ENCODE measurements at regions of chrX and their contacts with region 1.

Region 1: DNA sequence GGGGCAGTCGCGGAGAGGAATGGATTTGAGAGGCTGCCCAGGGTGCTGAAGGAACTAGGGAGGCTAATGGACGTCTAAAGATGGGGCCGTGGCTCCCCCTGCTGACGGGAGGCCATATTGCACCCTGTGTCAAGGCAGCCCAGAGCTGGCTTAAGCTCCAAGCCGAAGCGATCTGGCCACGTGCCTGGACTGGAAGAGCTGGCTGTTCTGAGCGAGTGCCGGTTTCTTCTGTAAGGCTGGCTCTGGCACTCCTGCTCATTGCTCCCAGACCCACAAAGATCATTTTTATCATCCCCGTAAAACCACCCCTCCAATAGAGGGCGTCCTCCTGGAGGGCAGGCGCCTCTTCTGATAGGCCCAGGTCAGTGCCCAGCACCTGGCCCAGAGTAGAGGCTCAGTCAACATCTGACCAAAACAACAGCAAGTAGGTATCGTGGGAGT is 5.6 kb downstream of the PNCK start:
- DNase-seq: peak; percentile 88
- ATAC-seq: peak; percentile 92
- H3K4me3 Mint-ChIP-seq: peak overlapping the region; percentile 70
- H3K27ac Mint-ChIP-seq: no peak overlapping the region
- H3K4me1 Mint-ChIP-seq: peaks cover 7% of the 10 kb centered on the region
- H3K27me3 Mint-ChIP-seq: peaks cover 7% of the 10 kb centered on the region

Region 2: GRCh38 chrX:152958524-152959465 is 709.2 kb before region 1 on chrX:
- CTCF ChIA-PET with region 1: interaction called, 3 read pairs
- POLR2A ChIA-PET with region 1: no interaction called
- intact Hi-C with region 1: loop called (anchors 5 kb)
- DNase-seq: peak; percentile 91
- ATAC-seq: peak; percentile 98
- H3K4me3 Mint-ChIP-seq: peak overlapping the region; percentile 52
- H3K27ac Mint-ChIP-seq: peak overlapping the region; percentile 91
- H3K4me1 Mint-ChIP-seq: peaks cover 6% of the 10 kb centered on the region
- H3K27me3 Mint-ChIP-seq: no peaks in the 10 kb centered on the region

Region 3: DNA sequence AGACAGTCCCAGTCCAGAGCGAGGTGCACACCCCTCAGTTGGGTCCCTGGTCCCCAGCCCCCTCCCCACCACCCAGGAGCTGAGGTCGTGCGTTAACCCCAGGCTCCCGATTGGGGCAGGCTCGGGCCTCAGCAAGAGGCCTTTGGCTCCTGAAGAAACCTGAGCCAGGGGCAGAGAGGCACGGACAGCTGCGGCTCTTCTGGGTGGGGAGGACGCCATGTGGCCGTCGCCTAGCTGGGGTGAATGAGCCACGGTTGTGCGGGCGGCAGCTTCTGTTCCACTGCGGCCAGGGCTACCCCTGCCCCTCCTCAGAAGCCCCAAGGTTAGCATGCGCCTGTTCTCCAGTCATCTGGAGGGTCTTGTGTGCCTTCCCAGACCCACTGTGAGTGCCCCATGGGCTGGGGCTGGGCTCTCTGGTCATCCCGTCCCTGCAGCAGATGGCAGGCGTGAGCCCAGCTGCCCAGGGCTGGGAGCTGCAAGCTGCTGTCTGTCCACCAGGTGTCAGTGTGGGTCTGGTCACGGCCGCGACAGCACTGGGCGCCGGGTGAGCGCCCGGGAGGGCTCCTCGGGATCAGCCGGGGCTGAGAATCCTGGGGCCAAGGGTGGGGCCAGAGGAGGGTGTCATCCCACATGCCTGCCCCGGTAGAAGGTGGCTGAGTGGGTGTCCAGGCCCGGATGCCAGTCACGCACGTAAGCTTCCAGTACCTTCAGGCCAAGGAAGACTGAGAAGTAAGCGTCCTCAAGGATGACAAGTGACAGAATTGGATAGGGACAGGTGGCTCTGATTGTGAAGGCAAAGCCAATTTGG is 128.6 kb before region 1 on chrX:
- CTCF ChIA-PET with region 1: interaction called, 33 read pairs
- POLR2A ChIA-PET with region 1: no interaction called
- intact Hi-C with region 1: loop called (anchors 1 to 5 kb)
- DNase-seq: peak; percentile 73
- ATAC-seq: peak; percentile 93
- H3K4me3 Mint-ChIP-seq: no peak overlapping the region
- H3K27ac Mint-ChIP-seq: no peak overlapping the region
- H3K4me1 Mint-ChIP-seq: no peaks in the 10 kb centered on the region
- H3K27me3 Mint-ChIP-seq: peaks cover 2% of the 10 kb centered on the region

Region 4: DNA sequence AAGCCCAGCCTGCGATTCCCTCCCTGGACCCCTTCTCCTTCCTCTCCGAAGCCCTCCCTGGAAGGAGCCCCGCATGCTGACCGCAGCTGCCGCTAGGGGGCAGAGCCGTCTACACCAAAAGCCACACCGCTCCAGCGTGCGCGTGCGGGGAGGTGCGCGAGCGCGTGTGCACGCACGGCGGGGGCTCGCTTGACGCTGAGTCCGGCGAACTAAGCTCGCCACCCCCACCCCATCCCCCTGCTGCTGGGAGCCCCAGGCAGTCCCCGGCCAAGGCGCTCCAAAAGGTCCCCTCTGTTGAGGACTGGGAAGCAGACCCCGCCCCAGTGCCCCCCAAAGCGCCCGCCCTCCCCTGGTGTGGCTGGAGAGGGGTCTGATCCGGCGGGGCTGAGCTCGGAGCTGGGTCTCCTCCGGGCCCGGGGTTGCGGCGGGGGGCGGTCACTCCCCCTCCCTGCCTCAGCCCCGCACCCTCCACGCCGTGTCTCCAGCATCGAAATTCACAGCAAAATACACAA is 58.0 kb before region 1 on chrX:
- CTCF ChIA-PET with region 1: interaction called, 19 read pairs
- POLR2A ChIA-PET with region 1: no interaction called
- intact Hi-C with region 1: loop called (anchors 1 to 5 kb)
- DNase-seq: peak; percentile 85
- ATAC-seq: peak; percentile 91
- H3K4me3 Mint-ChIP-seq: peak overlapping the region; percentile 62
- H3K27ac Mint-ChIP-seq: peak overlapping the region; percentile 73
- H3K4me1 Mint-ChIP-seq: peaks cover 13% of the 10 kb centered on the region
- H3K27me3 Mint-ChIP-seq: no peaks in the 10 kb centered on the region

Region 5: DNA sequence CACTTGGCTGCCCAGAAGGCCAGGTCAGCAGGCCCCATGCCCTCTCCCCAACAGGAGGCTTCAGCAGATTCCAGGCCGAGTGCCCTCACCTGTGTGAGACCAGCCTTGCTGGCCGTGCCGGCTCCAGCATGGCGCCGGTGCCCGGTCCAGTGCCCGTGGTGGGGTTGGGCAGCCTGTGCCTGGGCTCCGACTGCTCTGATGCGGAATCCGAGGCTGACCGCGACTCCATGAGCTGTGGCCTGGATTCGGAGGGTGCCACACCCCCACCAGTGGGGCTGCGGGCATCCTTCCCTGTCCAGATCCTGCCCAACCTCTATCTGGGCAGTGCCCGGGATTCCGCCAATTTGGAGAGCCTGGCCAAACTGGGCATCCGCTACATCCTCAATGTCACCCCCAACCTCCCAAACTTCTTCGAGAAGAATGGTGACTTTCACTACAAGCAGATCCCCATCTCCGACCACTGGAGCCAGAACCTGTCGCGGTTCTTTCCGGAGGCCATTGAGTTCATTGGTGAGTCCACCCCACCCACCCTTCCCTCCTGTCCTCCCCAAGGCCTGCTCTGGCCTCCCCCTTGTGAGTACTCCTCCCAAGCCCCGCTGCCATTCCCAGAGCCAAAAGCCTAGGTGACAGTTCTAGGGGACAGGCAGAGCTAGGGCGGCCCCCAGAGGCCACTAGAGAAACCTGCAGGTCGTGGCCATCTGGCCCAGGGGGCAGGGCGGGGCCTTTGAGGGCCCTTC is 18.6 kb before region 1 on chrX:
- CTCF ChIA-PET with region 1: interaction called, 12 read pairs
- POLR2A ChIA-PET with region 1: no interaction called
- intact Hi-C with region 1: no loop called
- DNase-seq: peak; percentile 64
- ATAC-seq: peak; percentile 84
- H3K4me3 Mint-ChIP-seq: no peak overlapping the region
- H3K27ac Mint-ChIP-seq: no peak overlapping the region
- H3K4me1 Mint-ChIP-seq: no peaks in the 10 kb centered on the region
- H3K27me3 Mint-ChIP-seq: peaks cover 17% of the 10 kb centered on the region

Region 6: GRCh38 chrX:153684467-153685155 is 16.6 kb after region 1 on chrX:
- CTCF ChIA-PET with region 1: interaction called, 12 read pairs
- POLR2A ChIA-PET with region 1: no interaction called
- intact Hi-C with region 1: no loop called
- DNase-seq: no peak
- ATAC-seq: no peak
- H3K4me3 Mint-ChIP-seq: no peak overlapping the region
- H3K27ac Mint-ChIP-seq: no peak overlapping the region
- H3K4me1 Mint-ChIP-seq: no peaks in the 10 kb centered on the region
- H3K27me3 Mint-ChIP-seq: peaks cover 8% of the 10 kb centered on the region

Region 7: DNA sequence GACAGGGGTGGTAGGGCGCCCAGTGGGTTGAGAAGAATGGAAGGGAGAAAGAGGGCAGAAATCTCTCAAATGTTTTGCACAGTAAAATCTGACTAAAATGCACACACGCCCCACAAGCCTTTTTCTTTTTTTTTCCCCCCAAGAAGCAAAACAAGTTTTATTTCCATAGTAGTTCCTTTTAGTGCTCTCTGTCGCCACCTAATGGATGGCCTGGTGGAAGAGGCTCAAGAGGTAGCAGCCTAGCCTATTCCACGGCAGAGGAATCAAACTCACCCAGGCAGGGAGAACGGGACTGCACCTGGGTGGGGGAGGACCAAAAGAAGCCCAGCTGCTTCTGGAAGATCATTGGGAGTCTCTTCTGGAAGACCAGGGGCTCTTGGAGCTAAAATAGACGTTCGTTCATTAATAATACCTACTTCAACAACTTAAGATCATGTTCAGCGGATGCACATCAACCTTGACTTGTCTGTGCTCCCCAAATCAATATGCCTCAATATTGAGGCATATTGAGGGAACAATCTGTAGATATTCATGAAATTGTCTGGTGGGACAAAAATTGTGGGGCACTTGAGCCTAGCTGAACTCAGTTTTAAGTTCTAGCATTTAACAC is 383.3 kb after region 1 on chrX:
- CTCF ChIA-PET with region 1: no interaction called
- POLR2A ChIA-PET with region 1: no interaction called
- intact Hi-C with region 1: no loop called
- DNase-seq: peak; percentile 81
- ATAC-seq: peak; percentile 85
- H3K4me3 Mint-ChIP-seq: no peak overlapping the region
- H3K27ac Mint-ChIP-seq: peak overlapping the region; percentile 40
- H3K4me1 Mint-ChIP-seq: peaks cover 33% of the 10 kb centered on the region
- H3K27me3 Mint-ChIP-seq: no peaks in the 10 kb centered on the region

Measured in activated CD4-positive, alpha-beta T cell treated with anti-CD3 and anti-CD28 coated beads for 36 hours (primary cell).